Activated T-helper 1 cell treated with anti-CD3 and anti-CD28 coated beads, Interleukin-12 subunit alpha, Interleukin-12 subunit beta, Interleukin-2, Interleukin-4 antibody, amounts not matched to agents 30 ng/mL and 10 ng/mL and 1 ng/mL, durations not matched to agents 14 hours and 24 hours and 36 hours (primary cell): ENCODE measurements at regions of chr10 and their contacts with region 1.

Region 1: GRCh38 chr10:11515596-11516430 is 95.6 kb downstream of the USP6NL start:
- DNase-seq: peak; percentile 29
- H3K4me3 Mint-ChIP-seq: no peak overlapping the region
- H3K27ac Mint-ChIP-seq: no peak overlapping the region
- H3K4me1 Mint-ChIP-seq: peaks cover 24% of the 10 kb centered on the region
- H3K27me3 Mint-ChIP-seq: peaks cover 35% of the 10 kb centered on the region

Region 2: DNA sequence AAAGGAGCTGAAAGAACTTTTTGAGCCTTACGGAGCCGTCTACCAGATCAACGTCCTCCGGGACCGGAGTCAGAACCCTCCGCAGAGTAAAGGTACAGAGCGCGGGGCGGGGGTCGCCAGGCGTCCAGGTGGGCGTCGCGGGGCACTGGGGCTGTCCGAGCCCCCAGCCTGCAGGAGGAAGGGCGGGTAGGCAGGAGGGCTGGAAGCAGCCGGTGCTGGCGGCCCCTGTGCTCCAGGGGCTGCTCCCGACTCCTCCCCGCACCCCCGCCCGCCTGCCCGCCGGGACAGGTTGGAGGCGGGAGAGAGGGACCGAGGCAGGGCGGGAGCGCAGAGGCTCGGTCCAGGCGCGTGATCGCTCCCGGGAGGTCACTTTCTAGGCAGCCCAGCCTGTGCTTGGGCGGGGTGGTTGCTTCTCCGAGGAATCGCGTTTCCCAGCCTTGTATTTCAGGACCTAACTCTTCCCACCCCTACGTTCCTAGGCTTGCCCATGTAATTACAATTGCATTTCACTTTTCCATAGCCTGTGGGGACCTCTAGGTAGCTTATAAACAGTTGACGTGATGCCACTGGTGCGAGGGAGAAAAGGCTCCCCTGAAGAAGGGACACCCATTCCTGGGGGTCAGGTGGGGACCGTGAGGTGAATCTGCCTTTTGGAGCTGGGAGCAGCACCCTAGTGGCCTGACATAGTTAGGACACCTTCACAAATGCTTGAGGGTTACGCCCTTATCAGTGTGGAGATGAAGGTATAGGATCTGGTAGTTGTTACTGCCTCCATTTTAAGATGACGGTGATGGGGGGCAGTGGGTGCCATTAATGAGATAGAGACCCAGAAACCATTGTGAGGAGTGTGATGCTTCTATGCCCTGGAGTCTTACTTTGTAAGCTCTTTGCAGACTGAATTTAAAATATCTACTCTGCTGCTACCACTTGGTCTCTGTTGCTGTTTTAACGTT is 349.9 kb before region 1 on chr10:
- intact Hi-C with region 1: loop called (anchors 5 kb)
- DNase-seq: peak; percentile 70
- H3K4me3 Mint-ChIP-seq: no peak overlapping the region
- H3K27ac Mint-ChIP-seq: peak overlapping the region; percentile 98
- H3K4me1 Mint-ChIP-seq: peaks cover 35% of the 10 kb centered on the region
- H3K27me3 Mint-ChIP-seq: no peaks in the 10 kb centered on the region

Region 3: DNA sequence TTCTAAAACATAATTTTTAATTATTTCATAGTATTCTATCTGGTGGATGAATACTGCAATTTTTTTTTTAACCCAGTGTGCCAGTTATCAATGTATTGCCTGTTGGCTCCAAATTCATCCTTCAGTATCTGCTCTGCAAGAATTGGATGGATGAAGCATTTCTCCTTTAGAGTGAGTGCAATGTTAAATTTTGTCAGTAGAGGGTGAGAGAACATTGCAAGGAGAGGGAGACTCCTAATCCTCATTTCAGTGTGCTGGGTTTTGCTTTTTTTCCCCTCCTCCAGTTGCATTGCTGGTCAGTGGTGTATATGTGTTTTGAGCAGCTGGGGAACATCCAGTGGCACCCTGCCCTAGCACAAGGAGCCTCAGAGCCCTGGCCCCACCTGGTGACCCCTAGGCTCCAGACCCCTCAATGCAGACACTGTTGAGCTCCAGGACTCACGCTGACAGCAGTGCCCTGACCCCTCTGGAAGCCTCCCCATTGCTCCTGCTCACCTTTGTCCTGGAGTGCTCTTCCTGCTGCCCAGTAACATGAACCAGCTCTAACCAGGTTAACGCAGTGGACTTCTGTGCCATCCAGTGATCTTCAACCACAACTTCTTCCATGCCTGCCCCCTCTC is 103.8 kb before region 1 on chr10:
- intact Hi-C with region 1: no loop called
- DNase-seq: no peak
- H3K4me3 Mint-ChIP-seq: no peak overlapping the region
- H3K27ac Mint-ChIP-seq: no peak overlapping the region
- H3K4me1 Mint-ChIP-seq: peaks cover 9% of the 10 kb centered on the region
- H3K27me3 Mint-ChIP-seq: peaks cover 17% of the 10 kb centered on the region

Region 4: GRCh38 chr10:11578802-11579255 is 63.0 kb after region 1 on chr10:
- intact Hi-C with region 1: loop called (anchors 1 kb)
- DNase-seq: no peak
- H3K4me3 Mint-ChIP-seq: no peak overlapping the region
- H3K27ac Mint-ChIP-seq: no peak overlapping the region
- H3K4me1 Mint-ChIP-seq: peaks cover 22% of the 10 kb centered on the region
- H3K27me3 Mint-ChIP-seq: peaks cover 11% of the 10 kb centered on the region

Region 5: GRCh38 chr10:11684717-11685645 is 169.2 kb after region 1 on chr10:
- intact Hi-C with region 1: loop called (anchors 1 kb)
- DNase-seq: peak; percentile 39
- H3K4me3 Mint-ChIP-seq: peak overlapping the region; percentile 76
- H3K27ac Mint-ChIP-seq: peak overlapping the region; percentile 84
- H3K4me1 Mint-ChIP-seq: peaks cover 25% of the 10 kb centered on the region
- H3K27me3 Mint-ChIP-seq: peaks cover 53% of the 10 kb centered on the region

Region 6: GRCh38 chr10:11704092-11704491 is 188.3 kb after region 1 on chr10:
- intact Hi-C with region 1: no loop called
- DNase-seq: no peak
- H3K4me3 Mint-ChIP-seq: no peak overlapping the region
- H3K27ac Mint-ChIP-seq: no peak overlapping the region
- H3K4me1 Mint-ChIP-seq: no peaks in the 10 kb centered on the region
- H3K27me3 Mint-ChIP-seq: peaks cover 55% of the 10 kb centered on the region

Region 7: GRCh38 chr10:11742005-11742778 is 226.4 kb after region 1 on chr10 and contains the start of gene ECHDC3:
- intact Hi-C with region 1: no loop called
- DNase-seq: no peak
- H3K4me3 Mint-ChIP-seq: peak within 1 kb of the TSS; percentile 20
- H3K27ac Mint-ChIP-seq: no peak within 1 kb of the TSS
- H3K4me1 Mint-ChIP-seq: no peaks in the 10 kb centered on the region
- H3K27me3 Mint-ChIP-seq: peaks cover 36% of the 10 kb centered on the region
- total RNA-seq, gene ECHDC3: 0.15 and 0.18 TPM in 2 replicates

Region 8: DNA sequence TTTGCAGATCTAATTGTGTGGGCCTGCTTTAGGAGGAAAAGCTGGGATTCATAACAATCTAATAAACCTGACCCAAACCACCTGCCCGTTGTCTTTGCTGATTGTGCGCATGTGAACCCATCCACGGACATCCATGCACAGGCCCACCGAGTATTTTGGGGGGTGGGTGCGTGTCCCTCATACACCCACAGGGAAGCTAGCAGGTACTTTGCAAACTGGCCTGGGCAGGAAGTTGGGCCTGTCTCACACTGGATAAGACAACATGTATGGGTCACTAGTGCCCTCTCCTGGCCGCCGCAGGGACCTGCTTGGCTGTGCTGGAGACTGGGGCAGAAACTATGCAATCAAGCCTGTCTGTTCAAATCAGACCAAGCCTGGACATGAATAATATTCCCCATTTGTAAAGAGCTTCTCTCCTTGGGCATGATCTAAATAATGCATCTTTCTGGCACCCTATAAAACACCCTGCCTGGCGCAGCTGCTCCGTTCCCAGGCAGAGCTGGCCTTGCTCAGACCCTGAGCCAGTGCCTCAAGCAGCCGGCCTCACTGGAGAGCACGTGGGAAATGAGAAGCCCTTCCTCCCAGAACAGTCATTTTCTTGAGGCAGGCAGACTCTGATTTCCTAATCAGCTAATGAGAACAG is 242.1 kb after region 1 on chr10:
- intact Hi-C with region 1: loop called (anchors 1 kb)
- DNase-seq: peak; percentile 69
- H3K4me3 Mint-ChIP-seq: no peak overlapping the region
- H3K27ac Mint-ChIP-seq: no peak overlapping the region
- H3K4me1 Mint-ChIP-seq: no peaks in the 10 kb centered on the region
- H3K27me3 Mint-ChIP-seq: peaks cover 14% of the 10 kb centered on the region

Region 9: DNA sequence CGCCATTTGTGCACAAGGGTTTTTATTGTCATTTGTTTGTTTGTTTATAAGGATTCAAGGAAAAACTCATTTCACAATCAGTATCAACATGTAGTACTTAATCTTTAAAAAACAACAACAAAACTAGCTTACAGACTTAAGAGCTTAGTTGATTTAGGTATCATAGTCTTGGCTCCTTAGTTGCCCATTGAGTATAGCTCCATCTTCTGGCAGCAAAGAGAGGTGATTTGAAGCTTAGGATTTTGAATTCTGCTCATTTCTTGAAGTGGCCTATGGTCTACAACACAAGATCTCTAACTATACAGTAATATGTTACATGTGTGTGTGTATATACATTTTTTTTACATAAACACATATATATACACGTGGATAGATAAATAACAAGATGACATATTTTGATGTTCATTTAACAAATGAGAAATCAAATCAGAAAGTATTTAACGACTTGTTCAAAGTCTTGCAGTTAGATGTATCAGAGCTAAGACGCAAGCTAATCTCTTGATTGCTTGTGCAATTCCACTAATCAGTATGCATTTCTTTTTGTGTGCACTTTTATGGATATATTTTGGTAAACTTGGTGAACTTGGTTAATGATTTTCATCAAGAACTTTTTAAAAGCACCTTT is 1140.8 kb after region 1 on chr10:
- intact Hi-C with region 1: loop called (anchors 5 kb)
- DNase-seq: peak; percentile 6
- H3K4me3 Mint-ChIP-seq: no peak overlapping the region
- H3K27ac Mint-ChIP-seq: peak overlapping the region; percentile 34
- H3K4me1 Mint-ChIP-seq: peaks cover 34% of the 10 kb centered on the region
- H3K27me3 Mint-ChIP-seq: no peaks in the 10 kb centered on the region